ENCODE measurements at regions of chr6 and their contacts with region 1.

Region 1: GRCh38 chr6:26045065-26045927 is 41.9 kb upstream of the HFE start:
- DNase-seq: peak; percentile 88
- CTCF ChIP-seq: peak; percentile 12

Region 2: DNA sequence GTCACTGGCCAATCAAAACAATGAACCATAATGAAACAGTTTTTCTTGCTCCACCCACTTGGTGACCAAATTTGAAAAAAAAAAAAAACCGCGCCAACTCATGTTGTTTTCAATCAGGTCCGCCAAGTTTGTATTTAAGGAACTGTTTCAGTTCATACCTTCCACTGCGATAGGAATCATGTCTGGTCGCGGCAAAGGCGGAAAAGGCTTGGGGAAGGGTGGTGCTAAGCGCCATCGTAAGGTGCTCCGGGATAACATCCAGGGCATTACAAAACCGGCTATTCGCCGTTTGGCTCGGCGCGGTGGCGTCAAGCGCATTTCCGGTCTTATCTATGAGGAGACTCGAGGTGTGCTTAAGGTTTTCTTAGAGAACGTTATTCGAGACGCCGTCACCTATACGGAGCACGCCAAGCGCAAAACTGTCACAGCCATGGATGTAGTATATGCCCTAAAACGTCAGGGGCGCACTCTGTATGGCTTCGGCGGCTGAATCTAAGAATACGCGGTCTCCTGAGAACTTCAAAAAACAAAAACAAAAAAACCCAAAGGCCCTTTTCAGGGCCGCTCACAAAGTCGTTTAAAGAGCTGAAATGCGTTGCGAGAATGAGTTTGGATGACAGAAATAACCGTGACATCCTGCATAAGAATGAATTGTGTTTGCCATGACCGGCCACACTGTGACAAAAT is 58.6 kb after region 1 on chr6:
- CTCF ChIA-PET with region 1: interaction called, 3 read pairs
- POLR2A ChIA-PET with region 1: interaction called, 15 read pairs
- DNase-seq: peak; percentile 78
- CTCF ChIP-seq: peak; percentile 52

Region 3: GRCh38 chr6:26351544-26351953 is 306.3 kb after region 1 on chr6:
- CTCF ChIA-PET with region 1: no interaction called
- POLR2A ChIA-PET with region 1: no interaction called
- DNase-seq: no peak
- CTCF ChIP-seq: no peak